Dendritic cell treated with granulocyte-macrophage colony-stimulating factor and Interleukin-4, amounts not matched to agents 40 ng/mL and 50 ng/mL, for 4 days (primary cell): ENCODE measurements at regions of chr12 and their contacts with region 1.

Region 1: DNA sequence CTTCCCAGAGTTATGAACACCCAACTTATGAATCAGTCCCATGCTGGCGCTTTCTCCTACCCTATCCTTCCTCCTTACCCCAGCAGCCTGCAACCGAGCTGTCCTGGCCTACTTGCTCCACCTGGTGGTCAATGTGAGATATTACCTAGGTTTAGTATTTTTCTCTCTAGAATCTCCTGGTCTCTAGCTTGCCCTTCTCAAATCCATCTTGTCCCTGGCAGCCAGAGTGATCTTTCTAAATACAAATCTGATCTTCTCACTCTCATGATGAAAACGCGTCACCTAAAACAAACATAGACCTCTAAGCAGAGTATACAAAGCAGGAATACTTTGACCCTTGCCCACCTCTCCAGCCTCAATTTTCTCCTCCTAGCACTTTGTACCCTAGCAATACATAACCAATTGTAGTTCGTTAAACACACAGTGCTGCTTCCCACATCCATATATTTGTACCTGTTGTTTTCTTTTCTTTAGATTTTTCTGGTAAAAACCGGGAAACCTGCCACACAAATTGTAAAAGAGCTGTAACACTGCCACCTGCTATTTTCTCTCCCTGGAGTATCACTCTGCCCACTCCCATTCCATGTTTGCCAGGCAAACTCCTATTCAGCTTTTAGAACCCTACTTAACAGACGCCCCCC is 20.0 kb upstream of the TCP11L2 start:
- H3K4me3 Mint-ChIP-seq: no peak overlapping the region
- H3K27ac Mint-ChIP-seq: no peak overlapping the region
- H3K4me1 Mint-ChIP-seq: peaks cover 31% of the 10 kb centered on the region
- H3K27me3 Mint-ChIP-seq: peaks cover 48% of the 10 kb centered on the region

Region 2: GRCh38 chr12:106223485-106224354 is 58.9 kb before region 1 on chr12:
- intact Hi-C with region 1: loop called (anchors 1 kb)
- H3K4me3 Mint-ChIP-seq: no peak overlapping the region
- H3K27ac Mint-ChIP-seq: no peak overlapping the region
- H3K4me1 Mint-ChIP-seq: peaks cover 23% of the 10 kb centered on the region
- H3K27me3 Mint-ChIP-seq: peaks cover 20% of the 10 kb centered on the region

Region 3: DNA sequence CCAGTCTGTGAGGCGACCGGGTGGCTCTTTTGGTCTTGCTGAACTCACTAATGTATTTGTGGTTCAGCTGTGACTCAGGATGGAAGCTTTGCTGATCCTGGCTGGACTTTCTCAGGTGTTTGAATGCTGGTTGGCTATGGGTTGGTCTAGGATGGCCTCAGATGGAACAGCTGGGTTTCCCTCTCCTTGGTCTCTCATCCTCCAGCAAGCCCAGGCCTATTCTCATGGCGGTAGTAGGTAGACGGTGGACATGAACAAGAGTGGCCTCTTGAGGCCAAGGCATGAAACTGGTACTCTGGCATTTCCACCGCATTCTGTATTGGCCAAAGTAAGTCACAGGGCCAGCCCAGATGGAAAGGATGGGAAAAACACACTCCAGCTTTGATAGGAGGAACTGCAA is 63.2 kb after region 1 on chr12:
- intact Hi-C with region 1: no loop called
- H3K4me3 Mint-ChIP-seq: no peak overlapping the region
- H3K27ac Mint-ChIP-seq: no peak overlapping the region
- H3K4me1 Mint-ChIP-seq: no peaks in the 10 kb centered on the region
- H3K27me3 Mint-ChIP-seq: peaks cover 6% of the 10 kb centered on the region